ENCODE measurements at regions of chr7 and their contacts with region 1.

Region 1: GRCh38 chr7:113086431-113086888 is at the start of gene GPR85:
- DNase-seq: peak; percentile 7 to 73
- H3K4me3 ChIP-seq: peak within 1 kb of the TSS; percentile 54 to 67
- H3K27ac ChIP-seq: peak within 1 kb of the TSS; percentile 54 to 61
- H3K4me1 ChIP-seq: peaks cover 0 to 3% of the 10 kb centered on the region in 2 donors
- H3K27me3 ChIP-seq: no peaks in the 10 kb centered on the region
- CTCF ChIP-seq: no peak
- total RNA-seq, gene GPR85: not detected

Region 2: DNA sequence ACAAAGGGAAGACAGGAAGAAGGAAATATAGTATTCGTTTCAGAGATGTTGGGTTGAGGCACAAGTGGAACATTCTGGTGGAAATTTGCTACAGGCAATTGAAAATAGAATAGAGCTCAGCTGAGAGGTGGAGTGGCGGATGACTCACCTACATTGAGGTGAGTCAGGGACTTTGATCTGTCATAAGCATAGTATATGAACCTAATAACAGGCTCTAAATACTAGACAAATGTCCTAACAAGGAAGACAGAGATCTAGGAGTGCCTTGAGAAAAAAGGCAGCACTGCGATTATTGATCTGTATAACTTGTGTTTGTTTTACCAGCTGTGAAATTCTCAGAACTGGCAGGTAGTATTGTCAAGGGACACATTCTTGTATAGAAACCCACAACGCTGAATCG is 637.1 kb before region 1 on chr7:
- intact Hi-C with region 1: no loop called
- DNase-seq: no peak
- H3K4me3 ChIP-seq: peak overlapping the region; percentile 78 to 96
- H3K27ac ChIP-seq: peak overlapping the region in 1 of 2 donors; percentile 99
- H3K4me1 ChIP-seq: peaks cover 0 to 4% of the 10 kb centered on the region in 2 donors
- H3K27me3 ChIP-seq: no peaks in the 10 kb centered on the region
- CTCF ChIP-seq: no peak

Region 3: DNA sequence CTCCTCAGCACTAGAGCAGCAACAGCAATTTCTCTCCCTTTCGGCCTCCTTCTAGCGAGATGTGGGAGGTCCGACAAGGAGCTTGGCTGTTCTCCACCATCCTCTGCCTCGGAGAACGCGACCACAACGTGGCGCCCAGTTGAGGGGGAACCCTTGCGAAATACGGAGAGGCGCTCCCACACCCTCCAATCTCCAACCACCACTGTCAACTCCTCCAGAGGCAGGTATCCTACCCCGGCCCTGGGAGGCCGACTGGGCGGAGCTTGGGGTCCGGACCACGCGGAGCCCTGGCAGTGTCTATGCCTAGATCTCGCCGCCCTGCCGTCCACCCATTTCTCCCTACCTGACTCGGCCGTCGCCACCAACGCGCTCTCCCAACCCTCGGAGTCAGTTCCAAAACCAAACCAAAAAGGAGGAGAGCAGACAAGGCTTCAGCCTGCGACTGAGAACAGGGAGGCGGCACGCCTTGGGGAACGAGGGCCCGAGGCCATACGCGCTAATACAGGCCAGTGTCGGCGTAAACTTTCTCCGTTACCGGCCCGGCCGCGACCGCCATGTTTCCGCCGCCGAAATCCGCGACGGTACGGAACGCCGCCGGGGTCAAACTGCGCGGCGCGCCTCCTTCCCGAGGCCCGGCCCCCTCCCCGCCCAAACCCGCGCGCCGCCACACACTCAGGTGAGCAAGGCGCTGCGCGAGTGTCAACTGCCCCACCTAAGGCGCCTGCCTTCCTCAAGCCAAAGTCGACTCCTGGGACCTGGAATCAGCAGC is 296.5 kb before region 1 on chr7 and contains the start of gene TMEM168:
- intact Hi-C with region 1: loop called (anchors 10 kb)
- DNase-seq: peak in 1 of 2 donors; percentile 87
- H3K4me3 ChIP-seq: peak within 1 kb of the TSS; percentile 90 to 99
- H3K27ac ChIP-seq: peak within 1 kb of the TSS; percentile 92 to 93
- H3K4me1 ChIP-seq: peaks cover 0 to 6% of the 10 kb centered on the region in 2 donors
- H3K27me3 ChIP-seq: no peaks in the 10 kb centered on the region
- CTCF ChIP-seq: peak in 1 of 3 experiments; percentile 3
- total RNA-seq, gene TMEM168: 8.4 TPM

Region 4: GRCh38 chr7:112939574-112940314 is 146.7 kb before region 1 on chr7:
- intact Hi-C with region 1: loop called (anchors 2 kb)
- DNase-seq: peak; percentile 98 to 100
- H3K4me3 ChIP-seq: peak overlapping the region; percentile 75 to 86
- H3K27ac ChIP-seq: peak overlapping the region; percentile 65 to 74
- H3K4me1 ChIP-seq: peaks cover 0 to 3% of the 10 kb centered on the region in 2 donors
- H3K27me3 ChIP-seq: no peaks in the 10 kb centered on the region
- CTCF ChIP-seq: no peak

Region 5: DNA sequence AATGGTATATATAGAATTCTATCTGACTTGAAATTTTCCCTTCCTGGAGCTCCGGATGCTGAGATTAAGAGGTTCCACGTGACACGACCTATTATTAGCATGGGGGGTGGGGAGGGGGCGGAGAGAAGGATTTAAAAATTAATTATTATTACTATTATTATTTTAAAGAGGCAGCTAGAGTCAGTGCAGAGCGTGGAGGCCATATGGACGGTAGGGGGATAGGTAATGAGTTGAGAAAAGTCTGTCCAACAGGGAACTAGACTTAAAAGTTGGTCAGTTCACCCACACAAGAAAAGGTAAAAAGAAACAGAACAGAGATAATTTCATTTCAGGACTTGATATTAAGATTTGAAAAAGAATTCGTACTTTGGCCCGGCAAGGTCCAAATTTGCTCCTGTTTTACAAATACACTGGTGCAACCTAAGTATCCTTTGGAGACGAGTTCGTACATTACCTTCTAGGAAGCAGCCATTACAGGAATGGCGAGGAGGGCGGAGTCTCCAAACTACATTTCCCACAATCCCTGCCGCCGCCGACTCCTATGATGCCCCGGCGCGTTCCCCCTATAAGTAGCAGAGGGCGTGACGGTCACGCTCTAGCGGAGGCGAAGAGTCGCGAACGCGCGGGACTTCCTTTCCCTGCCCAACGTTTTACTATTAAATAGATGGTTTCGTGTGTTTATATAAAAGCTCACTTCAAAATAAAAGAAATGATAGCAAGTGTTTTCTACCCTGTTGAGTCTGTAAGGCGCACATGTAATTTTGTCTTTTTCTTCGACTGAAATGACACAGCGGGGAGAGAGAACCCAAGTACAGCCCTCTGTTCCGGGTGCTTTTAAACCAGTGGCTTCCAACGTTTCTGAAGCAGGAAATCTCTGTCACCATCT is 31.9 kb after region 1 on chr7 and contains the start of gene SMIM30:
- intact Hi-C with region 1: loop called (anchors 1 kb)
- DNase-seq: peak; percentile 73 to 97
- H3K4me3 ChIP-seq: peak within 1 kb of the TSS; percentile 77 to 79
- H3K27ac ChIP-seq: peak within 1 kb of the TSS; percentile 56 to 75
- H3K4me1 ChIP-seq: peaks cover 0 to 3% of the 10 kb centered on the region in 2 donors
- H3K27me3 ChIP-seq: no peaks in the 10 kb centered on the region
- CTCF ChIP-seq: no peak
- total RNA-seq, gene SMIM30: 35.2 TPM